Heart left ventricle (tissue), 16 donors: ENCODE measurements at regions of chr20 and their contacts with region 1.

Region 1: GRCh38 chr20:64038565-64039292 is 2.7 kb downstream of the C20orf204 start:
- DNase-seq: peak; percentile 80 to 92 (median 87)
- ATAC-seq: peak; percentile 77 to 89 (median 83)
- H3K4me3 ChIP-seq: peak overlapping the region; percentile 9 to 62 (median 56)
- H3K27ac ChIP-seq: peak overlapping the region; percentile 64 to 93 (median 84)
- H3K4me1 ChIP-seq: peaks cover 8 to 74% (median 36%) of the 10 kb centered on the region in 12 donors
- H3K27me3 ChIP-seq: peaks cover 0 to 64% (median 44%) of the 10 kb centered on the region in 9 donors
- CTCF ChIP-seq: peak; percentile 66 to 81 (median 74)
- POLR2A ChIP-seq: no peak

Region 2: DNA sequence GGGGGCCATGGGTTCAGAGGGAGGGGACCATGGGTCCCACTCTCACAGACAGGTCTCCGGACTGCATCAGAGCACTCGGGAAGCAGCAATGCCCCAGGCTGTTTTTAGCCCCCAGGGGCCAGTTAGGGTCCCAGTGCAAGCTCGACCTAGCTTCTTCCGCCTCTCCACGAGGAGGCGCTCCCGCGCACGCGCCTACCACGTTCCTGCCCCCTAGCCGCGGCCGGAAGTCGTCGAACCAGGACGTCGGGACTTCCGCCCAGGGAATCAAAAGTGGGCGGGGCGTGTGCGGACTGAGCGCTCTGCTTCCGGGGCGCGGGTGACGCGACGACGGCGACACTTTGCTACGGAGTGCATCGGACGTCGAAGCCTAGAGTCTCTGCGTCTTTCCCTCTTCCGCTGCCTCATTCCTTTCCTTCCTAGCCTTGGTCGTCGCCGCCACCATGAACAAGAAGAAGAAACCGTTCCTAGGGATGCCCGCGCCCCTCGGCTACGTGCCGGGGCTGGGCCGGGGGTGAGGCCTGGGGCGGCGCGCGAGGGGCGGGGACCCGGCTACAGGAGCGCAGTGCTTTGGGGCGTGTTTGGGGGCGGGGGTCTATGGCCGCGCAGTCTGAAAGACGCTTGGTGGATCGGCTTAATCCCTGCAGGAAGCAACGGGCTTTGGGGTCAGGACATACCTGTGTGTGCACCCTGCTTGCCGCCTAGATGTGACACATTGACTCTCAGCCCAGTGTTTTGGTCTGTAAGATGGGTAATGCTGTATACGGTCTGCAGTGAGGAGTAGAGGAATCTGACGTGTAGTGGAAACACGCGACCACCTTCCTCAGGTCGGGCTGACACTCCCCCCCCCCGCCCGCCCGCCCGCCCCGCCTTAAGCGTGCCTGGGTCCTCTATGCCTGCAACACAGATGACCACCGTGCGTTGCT is 57.7 kb before region 1 on chr20 and contains the start of gene PRPF6:
- intact Hi-C with region 1: loop called in 5 of 10 experiments (anchors 5 to 10 kb)
- DNase-seq: peak; percentile 95 to 98 (median 97)
- ATAC-seq: peak; percentile 88 to 94 (median 90)
- H3K4me3 ChIP-seq: peak within 1 kb of the TSS; percentile 73 to 100 (median 93)
- H3K27ac ChIP-seq: peak within 1 kb of the TSS; percentile 53 to 93 (median 86)
- H3K4me1 ChIP-seq: peaks cover 7 to 45% (median 35%) of the 10 kb centered on the region in 12 donors
- H3K27me3 ChIP-seq: no peaks in the 10 kb centered on the region
- CTCF ChIP-seq: peak; percentile 66 to 98 (median 89)
- POLR2A ChIP-seq: peak in 1 of 2 donors; percentile 72
- total RNA-seq, gene PRPF6: 41.4 to 62.6 (median 47.6) TPM

Region 3: GRCh38 chr20:64055893-64056638 is 17.3 kb after region 1 on chr20:
- intact Hi-C with region 1: loop called in 5 of 10 experiments (anchors 1 to 2 kb)
- DNase-seq: peak; percentile 79 to 88 (median 88)
- ATAC-seq: peak; percentile 15 to 57 (median 40)
- H3K4me3 ChIP-seq: peak overlapping the region in 9 of 12 donors; percentile 12 to 49 (median 42)
- H3K27ac ChIP-seq: peak overlapping the region; percentile 70 to 98 (median 92)
- H3K4me1 ChIP-seq: peaks cover 0 to 61% (median 39%) of the 10 kb centered on the region in 12 donors
- H3K27me3 ChIP-seq: peaks cover 0 to 26% (median 0%) of the 10 kb centered on the region in 9 donors
- CTCF ChIP-seq: no peak
- POLR2A ChIP-seq: peak in 1 of 2 donors; percentile 20

Region 4: GRCh38 chr20:64062596-64063388 is 24.1 kb after region 1 on chr20 and contains the start of gene TCEA2:
- intact Hi-C with region 1: loop called in 4 of 10 experiments (anchors 2 kb)
- DNase-seq: peak; percentile 97 to 99 (median 98)
- ATAC-seq: peak; percentile 95 to 98 (median 95)
- H3K4me3 ChIP-seq: peak within 1 kb of the TSS; percentile 68 to 99 (median 92)
- H3K27ac ChIP-seq: peak within 1 kb of the TSS; percentile 59 to 89 (median 85)
- H3K4me1 ChIP-seq: peaks cover 6 to 48% (median 24%) of the 10 kb centered on the region in 12 donors
- H3K27me3 ChIP-seq: no peaks in the 10 kb centered on the region
- CTCF ChIP-seq: no peak
- POLR2A ChIP-seq: peak in 1 of 2 donors; percentile 90
- total RNA-seq, gene TCEA2: 19.2 to 52.1 (median 42.9) TPM